ENCODE measurements at regions of chr6 and their contacts with region 1.

Region 1: GRCh38 chr6:97068211-97068610 is 143.7 kb downstream of the KLHL32 start:
- DNase-seq: peak; percentile 49
- ATAC-seq: peak; percentile 63; the same call in 1 of the 2 replicates
- H3K4me3 ChIP-seq: no peak overlapping the region
- H3K27ac ChIP-seq: no peak overlapping the region
- H3K4me1 ChIP-seq: no peaks in the 10 kb centered on the region
- H3K27me3 ChIP-seq: peaks cover 9% of the 10 kb centered on the region
- CTCF ChIP-seq: peak; percentile 70
- POLR2A ChIP-seq: no peak
- RAD21 ChIP-seq: peak; percentile 68

Region 2: DNA sequence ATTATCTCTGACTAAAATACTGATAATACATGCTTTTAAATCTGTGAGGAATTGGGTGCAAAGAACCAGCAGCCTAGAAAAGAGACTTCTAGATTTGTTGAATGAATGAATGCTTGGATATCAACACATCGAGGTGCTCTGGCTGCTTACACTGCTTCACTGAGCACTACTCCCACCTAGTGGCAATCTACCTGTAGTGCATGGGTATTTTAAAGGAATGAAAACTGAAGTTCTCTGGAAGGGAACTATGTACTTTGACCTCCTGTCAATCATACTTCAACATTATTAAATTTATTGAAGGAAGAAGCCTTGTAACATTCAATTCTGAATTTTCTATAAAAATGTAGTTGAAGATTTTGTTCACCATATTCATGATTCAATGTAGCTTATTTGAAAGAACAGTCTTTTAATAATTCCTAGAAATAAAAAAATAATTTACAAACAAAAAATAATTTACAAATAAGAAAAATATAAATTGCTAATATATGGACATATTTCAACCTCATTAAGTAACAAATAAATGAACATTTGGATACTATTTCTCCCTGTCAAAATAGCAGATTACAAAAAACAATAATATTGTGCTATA is 326.0 kb after region 1 on chr6:
- CTCF ChIA-PET with region 1: no interaction called
- POLR2A ChIA-PET with region 1: no interaction called
- dilution Hi-C with region 1: no loop called
- in situ Hi-C with region 1: loop called (anchors 25 kb)
- intact Hi-C with region 1: loop called (anchors 1 kb)
- DNase-seq: peak; percentile 57
- ATAC-seq: peak; percentile 86
- H3K4me3 ChIP-seq: no peak overlapping the region
- H3K27ac ChIP-seq: no peak overlapping the region
- H3K4me1 ChIP-seq: no peaks in the 10 kb centered on the region
- H3K27me3 ChIP-seq: peaks cover 3% of the 10 kb centered on the region
- CTCF ChIP-seq: peak; percentile 91
- POLR2A ChIP-seq: no peak
- RAD21 ChIP-seq: peak; percentile 94

Region 3: DNA sequence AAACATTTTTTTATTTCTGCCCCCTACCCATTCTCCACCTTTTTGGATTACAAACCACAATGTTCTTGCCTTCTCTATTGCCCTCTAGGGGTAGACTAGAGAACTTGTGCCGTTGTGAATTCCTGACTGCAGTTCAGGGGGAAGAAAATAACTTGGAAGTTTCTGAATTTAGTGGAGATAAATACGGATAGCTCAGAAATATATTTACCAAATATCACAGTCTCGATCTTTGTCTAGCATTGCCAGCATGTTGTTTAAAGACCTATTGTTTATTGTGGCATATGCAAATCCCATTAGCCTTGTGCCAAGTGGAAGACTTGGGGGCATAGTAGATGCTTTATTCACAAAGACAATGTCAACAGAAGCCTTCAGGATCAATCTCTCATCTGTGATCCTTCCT is 368.9 kb after region 1 on chr6:
- CTCF ChIA-PET with region 1: no interaction called
- POLR2A ChIA-PET with region 1: no interaction called
- dilution Hi-C with region 1: no loop called
- in situ Hi-C with region 1: no loop called
- intact Hi-C with region 1: loop called (anchors 1 kb)
- DNase-seq: peak; percentile 18
- ATAC-seq: peak; percentile 62; the same call in 1 of the 2 replicates
- H3K4me3 ChIP-seq: no peak overlapping the region
- H3K27ac ChIP-seq: no peak overlapping the region
- H3K4me1 ChIP-seq: no peaks in the 10 kb centered on the region
- H3K27me3 ChIP-seq: no peaks in the 10 kb centered on the region
- CTCF ChIP-seq: peak; percentile 64
- POLR2A ChIP-seq: no peak
- RAD21 ChIP-seq: peak; percentile 42

Measured in IMR-90 (cell line).